Activated CD4-positive, alpha-beta memory T cell treated with anti-CD3 and anti-CD28 coated beads for 36 hours (primary cell): ENCODE measurements at regions of chr2 and their contacts with region 1.

Region 1: DNA sequence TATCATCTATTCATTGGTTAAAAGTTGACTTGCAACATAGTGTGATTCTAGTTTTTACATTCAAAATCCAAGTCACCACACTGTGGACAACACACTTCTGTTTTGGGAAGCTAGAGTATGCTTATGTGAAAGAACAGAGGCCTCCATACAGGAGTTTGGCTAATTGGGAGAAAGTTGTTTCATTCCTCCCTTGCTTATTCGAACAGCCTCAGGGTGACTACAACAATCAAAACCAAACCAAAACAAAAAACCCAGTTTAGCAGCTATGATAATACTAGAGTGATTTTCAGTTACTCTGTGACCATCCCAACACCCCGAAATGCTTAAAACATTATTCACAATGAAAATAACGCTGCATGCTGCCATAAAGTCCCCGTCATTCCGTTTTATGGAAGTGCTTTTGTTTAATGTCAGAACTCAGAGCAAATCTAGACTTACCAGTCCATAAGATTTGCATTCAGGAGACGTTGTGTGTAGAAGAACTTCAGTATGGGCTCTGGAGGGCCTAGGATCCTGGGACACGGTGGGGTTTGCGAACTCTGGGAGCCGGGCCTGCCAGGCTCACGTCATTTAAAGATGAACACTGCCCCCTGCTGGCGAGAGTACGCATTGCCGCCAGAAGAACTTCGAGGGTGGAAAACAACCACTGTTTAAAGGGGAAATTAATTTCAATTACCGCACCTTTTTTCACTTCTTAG is 111.4 kb downstream of the FTCDNL1 start:
- DNase-seq: peak; percentile 70
- H3K4me3 Mint-ChIP-seq: no peak overlapping the region
- H3K27ac Mint-ChIP-seq: no peak overlapping the region
- H3K4me1 Mint-ChIP-seq: peaks cover 6% of the 10 kb centered on the region
- H3K27me3 Mint-ChIP-seq: peaks cover 23% of the 10 kb centered on the region

Region 2: GRCh38 chr2:198309673-198310280 is 1429.8 kb before region 1 on chr2:
- CTCF ChIA-PET with region 1: interaction called, 34 read pairs
- POLR2A ChIA-PET with region 1: no interaction called
- intact Hi-C with region 1: loop called (anchors 2 kb)
- DNase-seq: peak; percentile 65
- H3K4me3 Mint-ChIP-seq: no peak overlapping the region
- H3K27ac Mint-ChIP-seq: no peak overlapping the region
- H3K4me1 Mint-ChIP-seq: no peaks in the 10 kb centered on the region
- H3K27me3 Mint-ChIP-seq: peaks cover 21% of the 10 kb centered on the region

Region 3: GRCh38 chr2:199366406-199366805 is 373.2 kb before region 1 on chr2:
- CTCF ChIA-PET with region 1: no interaction called
- POLR2A ChIA-PET with region 1: no interaction called
- intact Hi-C with region 1: no loop called
- DNase-seq: no peak
- H3K4me3 Mint-ChIP-seq: no peak overlapping the region
- H3K27ac Mint-ChIP-seq: no peak overlapping the region
- H3K4me1 Mint-ChIP-seq: no peaks in the 10 kb centered on the region
- H3K27me3 Mint-ChIP-seq: peaks cover 3% of the 10 kb centered on the region

Region 4: DNA sequence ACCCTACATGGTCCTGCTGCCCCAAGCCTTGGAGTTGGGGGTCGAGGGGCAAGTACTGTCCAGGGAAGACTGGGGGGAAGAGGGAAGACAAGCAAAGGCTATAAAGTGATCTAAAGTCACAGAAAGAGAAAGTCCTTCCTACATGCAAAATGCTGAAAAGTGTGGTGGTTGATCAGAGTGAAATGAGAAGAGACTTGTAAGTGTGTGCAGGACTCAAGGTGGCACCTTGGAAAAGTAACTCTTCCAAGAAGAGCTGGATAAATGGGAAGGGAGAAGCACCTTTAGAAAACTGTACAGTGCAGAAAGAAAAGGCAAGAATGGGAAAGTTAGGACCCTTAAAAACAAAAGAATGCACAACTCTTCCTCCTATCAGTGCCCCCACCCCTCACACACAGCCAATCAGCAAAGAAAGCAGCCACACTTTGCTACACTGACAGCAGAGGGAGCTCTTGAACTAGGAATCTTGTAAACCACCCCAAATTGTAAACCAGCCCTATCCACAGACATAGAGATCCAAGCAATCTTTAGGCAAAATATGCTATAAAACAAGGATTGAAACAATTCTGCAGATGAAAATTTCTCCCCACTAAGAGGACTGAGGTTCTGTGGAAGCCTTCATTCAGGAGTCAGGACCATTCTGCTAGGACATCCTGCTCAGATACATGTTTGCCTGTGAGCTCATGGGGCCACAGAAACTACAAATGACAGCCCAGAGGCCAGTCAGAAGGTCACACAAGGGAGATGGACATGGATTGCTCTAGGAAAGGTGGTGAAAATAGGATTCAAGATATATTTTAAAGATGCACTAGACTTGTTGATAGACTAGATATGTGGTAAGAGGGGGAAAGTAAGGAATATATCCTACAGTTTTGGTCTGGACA is 35.0 kb before region 1 on chr2:
- CTCF ChIA-PET with region 1: interaction called, 48 read pairs
- POLR2A ChIA-PET with region 1: no interaction called
- intact Hi-C with region 1: loop called (anchors 1 kb)
- DNase-seq: peak; percentile 32
- H3K4me3 Mint-ChIP-seq: no peak overlapping the region
- H3K27ac Mint-ChIP-seq: no peak overlapping the region
- H3K4me1 Mint-ChIP-seq: no peaks in the 10 kb centered on the region
- H3K27me3 Mint-ChIP-seq: peaks cover 1% of the 10 kb centered on the region

Region 5: DNA sequence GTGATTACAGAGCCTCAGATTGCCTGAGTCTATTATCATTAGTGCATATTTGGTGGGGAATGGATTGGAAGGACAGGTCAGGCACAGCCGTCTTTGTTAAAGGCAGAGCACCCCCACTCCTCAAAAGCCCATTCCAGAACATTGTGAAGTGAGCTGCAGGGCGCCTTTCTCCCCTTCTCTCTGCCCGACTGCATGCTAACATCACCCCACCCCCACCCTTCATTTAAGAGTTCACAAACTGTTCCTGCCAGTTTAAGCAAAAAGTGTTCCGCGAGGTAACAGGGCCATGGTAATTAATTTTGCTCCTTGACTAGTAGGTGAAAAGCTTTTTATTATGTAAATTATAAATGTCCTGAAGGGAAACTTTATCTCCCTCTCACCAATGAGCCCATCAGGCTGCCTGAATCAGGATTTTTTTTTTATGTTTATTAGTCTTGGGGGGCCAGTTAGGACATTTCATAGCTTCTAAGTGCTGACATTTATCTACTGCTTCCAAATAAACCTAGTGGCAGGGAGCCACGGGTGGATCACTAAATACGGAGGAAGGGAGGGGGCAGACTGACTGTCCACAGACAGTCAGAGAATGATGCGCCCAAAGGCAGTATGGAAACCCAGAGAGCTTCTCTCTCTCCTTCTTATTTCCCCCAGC is 12.0 kb after region 1 on chr2:
- CTCF ChIA-PET with region 1: interaction called, 19 read pairs
- POLR2A ChIA-PET with region 1: no interaction called
- intact Hi-C with region 1: no loop called
- DNase-seq: no peak
- H3K4me3 Mint-ChIP-seq: no peak overlapping the region
- H3K27ac Mint-ChIP-seq: no peak overlapping the region
- H3K4me1 Mint-ChIP-seq: no peaks in the 10 kb centered on the region
- H3K27me3 Mint-ChIP-seq: peaks cover 5% of the 10 kb centered on the region

Region 6: GRCh38 chr2:199765646-199766045 is 26.1 kb after region 1 on chr2:
- CTCF ChIA-PET with region 1: interaction called, 11 read pairs
- POLR2A ChIA-PET with region 1: no interaction called
- intact Hi-C with region 1: no loop called
- DNase-seq: no peak
- H3K4me3 Mint-ChIP-seq: no peak overlapping the region
- H3K27ac Mint-ChIP-seq: no peak overlapping the region
- H3K4me1 Mint-ChIP-seq: no peaks in the 10 kb centered on the region
- H3K27me3 Mint-ChIP-seq: no peaks in the 10 kb centered on the region

Region 7: GRCh38 chr2:199870581-199870980 is 131.0 kb after region 1 on chr2:
- CTCF ChIA-PET with region 1: no interaction called
- POLR2A ChIA-PET with region 1: no interaction called
- intact Hi-C with region 1: no loop called
- DNase-seq: no peak
- H3K4me3 Mint-ChIP-seq: no peak overlapping the region
- H3K27ac Mint-ChIP-seq: no peak overlapping the region
- H3K4me1 Mint-ChIP-seq: no peaks in the 10 kb centered on the region
- H3K27me3 Mint-ChIP-seq: peaks cover 20% of the 10 kb centered on the region